Activated naive CD4-positive, alpha-beta T cell treated with anti-CD3 and anti-CD28 coated beads for 36 hours (primary cell): ENCODE measurements at regions of chr14 and their contacts with region 1.

Region 1: GRCh38 chr14:52552063-52552988 is at the starts of genes GPR137C and TXNDC16:
- DNase-seq: peak; percentile 100
- H3K4me3 Mint-ChIP-seq: peak within 1 kb of the TSS; percentile 88
- H3K27ac Mint-ChIP-seq: peak within 1 kb of the TSS; percentile 77
- H3K4me1 Mint-ChIP-seq: peaks cover 15% of the 10 kb centered on the region
- H3K27me3 Mint-ChIP-seq: no peaks in the 10 kb centered on the region
- total RNA-seq, gene GPR137C: 0.07 TPM in 1 of 2 experiments, not detected in the other
- total RNA-seq, gene TXNDC16: 4.5 to 4.6 TPM

Region 2: DNA sequence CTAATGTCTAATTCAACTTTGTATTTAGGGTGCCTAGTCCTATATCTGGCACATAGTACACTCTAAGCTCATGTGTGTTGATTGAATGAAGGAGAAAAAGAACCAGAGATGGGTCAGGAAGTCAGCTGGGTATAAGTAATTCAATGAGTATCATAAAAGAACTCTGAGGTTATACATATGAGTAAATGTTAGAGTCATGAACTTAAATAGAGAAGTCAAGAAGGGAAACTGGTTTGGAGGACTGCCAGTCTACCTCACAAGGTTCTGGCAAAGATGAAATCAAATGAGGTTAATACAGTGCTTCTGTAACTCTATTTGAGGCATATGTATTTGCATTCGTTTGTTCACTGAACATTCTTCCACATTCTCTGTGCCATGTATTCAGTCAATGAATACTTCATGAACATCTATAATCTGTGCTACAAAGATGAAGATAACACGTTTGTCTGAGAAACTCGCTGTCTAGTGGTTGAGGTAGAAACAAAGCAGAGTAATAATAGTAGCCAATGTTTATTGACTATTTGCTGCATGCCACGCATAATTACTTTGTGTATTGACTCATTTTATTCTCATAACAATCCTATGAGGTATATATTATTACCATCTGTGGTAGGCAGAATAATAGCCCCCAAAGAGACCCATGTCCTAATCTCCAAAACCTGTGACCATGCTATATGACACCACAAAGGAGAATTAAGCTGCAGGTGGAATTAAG is 149.4 kb before region 1 on chr14:
- CTCF ChIA-PET with region 1: no interaction called
- intact Hi-C with region 1: loop called (anchors 5 kb)
- DNase-seq: peak; percentile 77
- H3K4me3 Mint-ChIP-seq: no peak overlapping the region
- H3K27ac Mint-ChIP-seq: no peak overlapping the region
- H3K4me1 Mint-ChIP-seq: peaks cover 50% of the 10 kb centered on the region
- H3K27me3 Mint-ChIP-seq: peaks cover 4% of the 10 kb centered on the region

Region 3: GRCh38 chr14:52729925-52730667 is 177.8 kb after region 1 on chr14 and contains the start of gene STYX:
- CTCF ChIA-PET with region 1: no interaction called
- intact Hi-C with region 1: loop called (anchors 1 kb)
- DNase-seq: peak; percentile 98
- H3K4me3 Mint-ChIP-seq: peak within 1 kb of the TSS; percentile 84
- H3K27ac Mint-ChIP-seq: peak within 1 kb of the TSS; percentile 86
- H3K4me1 Mint-ChIP-seq: peaks cover 38% of the 10 kb centered on the region
- H3K27me3 Mint-ChIP-seq: no peaks in the 10 kb centered on the region
- total RNA-seq, gene STYX: 13.3 to 14.1 TPM

Region 4: DNA sequence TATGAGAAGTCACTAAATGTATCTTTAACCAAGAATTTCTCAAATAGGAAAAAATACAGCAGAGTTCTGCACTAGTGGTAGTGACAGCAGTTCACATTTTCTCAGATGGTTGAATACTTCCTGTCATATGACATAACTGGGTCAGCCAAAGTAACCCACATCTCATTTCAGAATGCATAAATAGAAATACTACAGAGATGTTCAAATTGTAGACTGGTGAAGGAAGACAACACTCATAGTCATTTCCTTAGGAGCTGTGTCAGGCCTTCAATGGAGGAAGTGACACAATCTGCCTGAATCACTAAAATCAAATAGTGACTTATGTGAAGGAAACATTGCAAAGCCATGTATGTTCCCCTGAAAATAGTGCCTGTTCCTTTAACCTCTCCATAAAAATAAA is 366.2 kb after region 1 on chr14:
- CTCF ChIA-PET with region 1: no interaction called
- intact Hi-C with region 1: loop called (anchors 2 kb)
- DNase-seq: peak; percentile 47
- H3K4me3 Mint-ChIP-seq: no peak overlapping the region
- H3K27ac Mint-ChIP-seq: peak overlapping the region; percentile 50
- H3K4me1 Mint-ChIP-seq: peaks cover 17% of the 10 kb centered on the region
- H3K27me3 Mint-ChIP-seq: no peaks in the 10 kb centered on the region

Region 5: GRCh38 chr14:53144244-53144643 is 591.9 kb after region 1 on chr14:
- CTCF ChIA-PET with region 1: no interaction called
- intact Hi-C with region 1: loop called (anchors 2 kb)
- DNase-seq: peak; percentile 31
- H3K4me3 Mint-ChIP-seq: no peak overlapping the region
- H3K27ac Mint-ChIP-seq: peak overlapping the region; percentile 18
- H3K4me1 Mint-ChIP-seq: peaks cover 62% of the 10 kb centered on the region
- H3K27me3 Mint-ChIP-seq: no peaks in the 10 kb centered on the region

Region 6: DNA sequence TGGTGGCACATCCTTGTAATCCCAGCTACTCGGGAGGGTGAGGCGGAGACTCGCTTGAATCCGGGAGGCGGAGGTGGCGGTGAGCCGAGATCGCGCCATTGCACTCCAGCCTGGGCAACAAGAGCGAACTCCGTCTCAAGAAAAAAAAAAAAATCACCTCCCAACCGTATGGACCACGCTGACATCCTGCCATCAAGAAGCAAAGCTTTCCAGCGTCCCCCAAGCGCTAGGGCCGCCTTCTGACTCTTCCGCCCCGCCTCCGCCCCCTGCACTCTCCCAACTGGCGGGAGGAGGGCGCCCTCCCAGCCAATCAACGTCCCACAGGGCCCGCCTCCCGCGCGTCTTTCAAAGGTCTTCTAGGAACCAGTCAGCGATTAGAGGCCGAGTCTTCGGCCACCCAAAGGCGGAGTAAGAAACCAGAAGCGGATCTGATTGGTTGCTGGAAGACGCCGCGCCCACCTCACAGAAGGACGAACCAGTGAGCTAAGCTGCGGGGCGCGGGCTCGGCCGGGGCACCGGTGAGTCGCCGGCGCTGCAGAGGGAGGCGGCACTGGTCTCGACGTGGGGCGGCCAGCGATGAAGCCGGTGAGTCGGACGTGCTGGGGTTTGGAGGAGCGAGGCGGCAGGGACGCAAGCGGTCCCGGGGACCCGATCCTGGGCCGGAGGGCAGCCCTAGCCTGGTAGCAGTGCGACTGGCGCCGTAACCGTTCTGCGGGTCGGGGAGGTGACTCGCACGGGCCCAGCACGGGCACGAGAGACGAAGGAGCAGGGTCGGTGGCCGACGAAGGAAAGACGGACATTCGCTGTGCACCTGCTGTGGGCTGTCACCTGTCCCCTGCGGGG is 1844.4 kb after region 1 on chr14 and contains the start of gene CDKN3:
- CTCF ChIA-PET with region 1: no interaction called
- intact Hi-C with region 1: loop called (anchors 5 kb)
- DNase-seq: peak; percentile 99
- H3K4me3 Mint-ChIP-seq: peak within 1 kb of the TSS; percentile 86
- H3K27ac Mint-ChIP-seq: peak within 1 kb of the TSS; percentile 65
- H3K4me1 Mint-ChIP-seq: peaks cover 8% of the 10 kb centered on the region
- H3K27me3 Mint-ChIP-seq: peaks cover 2% of the 10 kb centered on the region
- total RNA-seq, gene CDKN3: 96.5 to 101 TPM